ENCODE measurements at regions of chr7 and their contacts with region 1.

Region 1: GRCh38 chr7:143214789-143215679 is 6.8 kb upstream of the TAS2R40 start:
- DNase-seq: peak; percentile 68
- H3K4me3 Mint-ChIP-seq: no peak overlapping the region
- H3K27ac Mint-ChIP-seq: no peak overlapping the region
- H3K4me1 Mint-ChIP-seq: no peaks in the 10 kb centered on the region
- H3K27me3 Mint-ChIP-seq: peaks cover 3% of the 10 kb centered on the region

Region 2: DNA sequence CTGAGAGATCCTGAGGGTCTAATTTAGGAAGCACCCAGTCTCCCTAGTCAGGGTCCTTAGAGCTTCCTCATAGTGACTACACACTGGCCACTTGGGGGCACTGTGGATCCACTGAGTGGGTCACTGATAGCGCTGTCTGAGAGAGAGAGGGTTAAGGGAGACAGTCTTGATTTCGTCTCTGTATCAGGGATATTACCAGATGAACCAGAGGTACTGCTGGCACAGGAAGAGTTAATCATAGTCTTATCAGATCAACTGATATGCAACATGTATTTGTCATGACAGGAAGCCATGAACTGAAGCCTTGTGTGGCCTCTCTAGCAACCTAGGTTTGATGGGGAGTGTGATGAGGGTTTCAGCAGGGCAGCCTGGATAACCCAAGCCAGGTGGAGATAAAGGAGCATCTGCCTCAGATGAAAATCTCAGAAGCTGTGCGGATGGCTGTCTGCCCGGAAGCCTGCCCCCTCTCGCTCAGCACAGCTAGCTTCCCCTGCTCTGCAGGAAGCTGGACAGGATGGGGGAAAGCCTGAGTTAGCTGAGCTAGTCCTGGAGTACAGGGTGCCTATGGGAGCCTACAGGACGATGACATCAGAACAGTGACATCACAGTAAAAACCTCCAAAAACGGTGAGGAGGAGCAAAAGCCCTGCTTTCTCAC is 679.8 kb before region 1 on chr7:
- CTCF ChIA-PET with region 1: no interaction called
- POLR2A ChIA-PET with region 1: no interaction called
- intact Hi-C with region 1: loop called (anchors 10 kb)
- DNase-seq: peak; percentile 89
- H3K4me3 Mint-ChIP-seq: peak overlapping the region; percentile 67
- H3K27ac Mint-ChIP-seq: peak overlapping the region; percentile 86
- H3K4me1 Mint-ChIP-seq: peaks cover 32% of the 10 kb centered on the region
- H3K27me3 Mint-ChIP-seq: peaks cover 3% of the 10 kb centered on the region

Region 3: GRCh38 chr7:142632291-142633134 is 582.5 kb before region 1 on chr7:
- CTCF ChIA-PET with region 1: interaction called, 5 read pairs
- POLR2A ChIA-PET with region 1: no interaction called
- intact Hi-C with region 1: loop called (anchors 10 kb)
- DNase-seq: peak; percentile 66
- H3K4me3 Mint-ChIP-seq: no peak overlapping the region
- H3K27ac Mint-ChIP-seq: no peak overlapping the region
- H3K4me1 Mint-ChIP-seq: peaks cover 3% of the 10 kb centered on the region
- H3K27me3 Mint-ChIP-seq: no peaks in the 10 kb centered on the region

Region 4: DNA sequence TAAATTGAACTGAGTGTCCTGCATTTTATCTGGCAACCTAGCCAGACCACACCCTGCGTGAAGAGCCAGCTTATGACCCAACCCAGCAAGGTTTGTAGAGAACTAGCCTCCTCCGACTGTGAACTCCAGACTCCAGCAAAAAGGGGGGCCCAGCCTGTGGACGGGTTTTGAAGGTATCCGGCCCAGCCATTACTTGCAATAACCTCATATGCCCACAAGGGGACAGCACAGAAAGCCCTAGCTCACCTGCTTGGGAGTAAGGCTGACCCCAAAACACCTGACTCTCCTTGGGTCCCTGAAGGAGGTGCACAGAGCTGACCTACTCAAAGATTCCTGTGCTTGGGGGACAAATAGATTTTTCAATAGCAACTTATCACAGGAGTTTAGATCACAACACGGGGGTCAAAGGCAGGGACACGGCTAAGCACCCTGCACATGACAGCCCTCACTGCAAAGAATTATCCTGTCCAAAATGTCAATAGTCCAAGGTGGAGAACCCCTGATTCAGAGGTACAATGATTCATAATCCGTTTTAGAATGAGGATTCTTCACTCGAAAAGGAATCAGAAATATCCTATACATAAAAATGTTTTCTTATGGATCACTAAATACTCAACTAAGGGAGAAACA is 334.0 kb before region 1 on chr7:
- CTCF ChIA-PET with region 1: interaction called, 19 read pairs
- POLR2A ChIA-PET with region 1: no interaction called
- intact Hi-C with region 1: loop called (anchors 1 kb)
- DNase-seq: peak; percentile 59
- H3K4me3 Mint-ChIP-seq: no peak overlapping the region
- H3K27ac Mint-ChIP-seq: no peak overlapping the region
- H3K4me1 Mint-ChIP-seq: no peaks in the 10 kb centered on the region
- H3K27me3 Mint-ChIP-seq: peaks cover 2% of the 10 kb centered on the region

Region 5: GRCh38 chr7:143188994-143189393 is 26.0 kb before region 1 on chr7:
- CTCF ChIA-PET with region 1: interaction called, 15 read pairs
- POLR2A ChIA-PET with region 1: no interaction called
- intact Hi-C with region 1: no loop called
- DNase-seq: no peak
- H3K4me3 Mint-ChIP-seq: no peak overlapping the region
- H3K27ac Mint-ChIP-seq: no peak overlapping the region
- H3K4me1 Mint-ChIP-seq: no peaks in the 10 kb centered on the region
- H3K27me3 Mint-ChIP-seq: peaks cover 12% of the 10 kb centered on the region

Region 6: GRCh38 chr7:143299840-143300239 is 84.8 kb after region 1 on chr7:
- CTCF ChIA-PET with region 1: interaction called, 12 read pairs
- POLR2A ChIA-PET with region 1: no interaction called
- intact Hi-C with region 1: no loop called
- DNase-seq: peak; percentile 68
- H3K4me3 Mint-ChIP-seq: no peak overlapping the region
- H3K27ac Mint-ChIP-seq: no peak overlapping the region
- H3K4me1 Mint-ChIP-seq: peaks cover 50% of the 10 kb centered on the region
- H3K27me3 Mint-ChIP-seq: no peaks in the 10 kb centered on the region

Measured in activated CD4-positive, alpha-beta memory T cell treated with anti-CD3 and anti-CD28 coated beads for 36 hours (primary cell).